ENCODE measurements at regions of chr3 and their contacts with region 1.

Region 1: DNA sequence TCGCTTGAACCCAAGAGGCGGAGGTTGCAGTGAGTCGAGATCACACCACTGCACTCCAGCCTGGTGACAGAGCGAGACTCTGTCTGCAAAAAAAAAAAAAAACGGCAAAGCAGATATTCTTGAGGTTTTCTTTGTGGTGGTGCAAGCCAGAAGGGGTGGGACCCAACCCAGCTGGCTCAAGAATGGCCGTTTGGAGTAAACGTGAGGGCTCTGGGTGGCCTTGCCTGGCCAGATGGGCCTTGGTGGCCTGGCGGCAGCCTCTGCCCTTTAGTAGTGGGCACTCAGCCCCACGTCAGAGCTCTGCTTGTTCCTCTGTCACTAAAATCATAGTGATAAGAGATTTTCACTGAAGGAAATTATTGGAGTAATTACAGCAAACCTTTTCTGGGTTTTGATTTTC is 50.5 kb downstream of the ATP1B3 start:
- DNase-seq: no peak
- ATAC-seq: no peak
- H3K4me3 Mint-ChIP-seq: no peak overlapping the region
- H3K27ac Mint-ChIP-seq: no peak overlapping the region
- H3K4me1 Mint-ChIP-seq: no peaks in the 10 kb centered on the region
- H3K27me3 Mint-ChIP-seq: no peaks in the 10 kb centered on the region
- CTCF ChIP-seq: no peak

Region 2: DNA sequence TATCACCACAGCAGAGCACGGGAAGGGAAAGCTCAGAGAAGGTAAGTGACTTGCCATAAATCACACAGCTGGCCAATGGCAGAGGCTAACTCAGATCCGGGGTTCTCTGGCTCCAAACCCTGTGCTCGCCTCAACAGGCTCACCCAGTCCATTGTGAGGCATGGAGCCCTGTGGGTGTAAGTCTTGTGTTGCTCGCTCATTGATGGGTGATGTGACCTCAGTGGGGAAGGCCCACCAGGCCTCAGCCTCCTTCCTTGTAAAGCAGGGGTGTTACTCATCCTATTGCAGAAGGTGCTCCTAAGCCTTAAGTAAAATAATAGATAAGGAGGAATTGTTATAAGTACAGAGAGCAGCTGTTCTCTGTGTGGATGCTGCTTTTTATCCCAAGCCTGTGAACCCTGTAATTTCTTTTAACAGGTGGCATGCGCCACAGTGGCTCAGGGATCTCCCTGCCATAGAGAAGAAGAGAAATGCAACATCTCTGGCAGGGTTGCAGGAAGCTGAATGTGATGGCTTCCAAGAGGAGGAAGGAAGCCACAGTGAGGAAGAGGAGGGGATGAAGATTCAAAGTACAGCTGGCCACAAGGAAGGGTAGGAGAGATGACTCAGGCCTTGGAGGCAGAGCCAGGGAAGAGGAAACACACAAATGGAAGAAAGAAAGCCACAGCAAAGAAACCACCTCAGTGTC is 906.6 kb before region 1 on chr3:
- CTCF ChIA-PET with region 1: no interaction called
- POLR2A ChIA-PET with region 1: no interaction called
- intact Hi-C with region 1: no loop called
- DNase-seq: no peak
- ATAC-seq: no peak
- H3K4me3 Mint-ChIP-seq: no peak overlapping the region
- H3K27ac Mint-ChIP-seq: no peak overlapping the region
- H3K4me1 Mint-ChIP-seq: peaks cover 5% of the 10 kb centered on the region
- H3K27me3 Mint-ChIP-seq: peaks cover 3% of the 10 kb centered on the region
- CTCF ChIP-seq: no peak

Region 3: DNA sequence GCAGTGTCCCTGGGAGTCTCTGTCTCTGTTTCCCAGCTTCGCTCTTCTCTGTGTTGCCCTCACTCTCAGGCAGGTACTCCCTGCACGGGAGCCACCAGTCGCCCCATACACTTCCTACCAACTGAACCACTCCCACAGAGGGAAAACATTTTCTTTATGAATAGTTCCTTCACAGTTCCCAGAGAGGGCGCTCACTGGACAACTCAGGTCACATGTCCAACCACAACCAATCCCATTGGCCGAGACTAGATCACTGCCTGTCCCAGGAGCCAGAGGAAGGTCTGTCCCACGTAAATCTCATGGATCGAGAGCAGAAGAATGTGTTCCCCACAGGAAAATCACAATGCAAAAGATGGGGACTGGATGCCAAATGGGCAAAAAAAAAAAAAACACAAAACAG is 137.6 kb before region 1 on chr3:
- CTCF ChIA-PET with region 1: no interaction called
- POLR2A ChIA-PET with region 1: no interaction called
- intact Hi-C with region 1: no loop called
- DNase-seq: no peak
- ATAC-seq: no peak
- H3K4me3 Mint-ChIP-seq: no peak overlapping the region
- H3K27ac Mint-ChIP-seq: no peak overlapping the region
- H3K4me1 Mint-ChIP-seq: peaks cover 1% of the 10 kb centered on the region
- H3K27me3 Mint-ChIP-seq: no peaks in the 10 kb centered on the region
- CTCF ChIP-seq: no peak

Region 4: GRCh38 chr3:141945741-141946485 is 19.0 kb after region 1 on chr3:
- CTCF ChIA-PET with region 1: no interaction called
- POLR2A ChIA-PET with region 1: interaction called, 10 read pairs
- intact Hi-C with region 1: no loop called
- DNase-seq: no peak
- ATAC-seq: no peak
- H3K4me3 Mint-ChIP-seq: no peak overlapping the region
- H3K27ac Mint-ChIP-seq: no peak overlapping the region
- H3K4me1 Mint-ChIP-seq: peaks cover 2% of the 10 kb centered on the region
- H3K27me3 Mint-ChIP-seq: no peaks in the 10 kb centered on the region
- CTCF ChIP-seq: no peak